Adrenal gland (tissue), 19 donors: ENCODE measurements at regions of chr18 and their contacts with region 1.

Region 1: DNA sequence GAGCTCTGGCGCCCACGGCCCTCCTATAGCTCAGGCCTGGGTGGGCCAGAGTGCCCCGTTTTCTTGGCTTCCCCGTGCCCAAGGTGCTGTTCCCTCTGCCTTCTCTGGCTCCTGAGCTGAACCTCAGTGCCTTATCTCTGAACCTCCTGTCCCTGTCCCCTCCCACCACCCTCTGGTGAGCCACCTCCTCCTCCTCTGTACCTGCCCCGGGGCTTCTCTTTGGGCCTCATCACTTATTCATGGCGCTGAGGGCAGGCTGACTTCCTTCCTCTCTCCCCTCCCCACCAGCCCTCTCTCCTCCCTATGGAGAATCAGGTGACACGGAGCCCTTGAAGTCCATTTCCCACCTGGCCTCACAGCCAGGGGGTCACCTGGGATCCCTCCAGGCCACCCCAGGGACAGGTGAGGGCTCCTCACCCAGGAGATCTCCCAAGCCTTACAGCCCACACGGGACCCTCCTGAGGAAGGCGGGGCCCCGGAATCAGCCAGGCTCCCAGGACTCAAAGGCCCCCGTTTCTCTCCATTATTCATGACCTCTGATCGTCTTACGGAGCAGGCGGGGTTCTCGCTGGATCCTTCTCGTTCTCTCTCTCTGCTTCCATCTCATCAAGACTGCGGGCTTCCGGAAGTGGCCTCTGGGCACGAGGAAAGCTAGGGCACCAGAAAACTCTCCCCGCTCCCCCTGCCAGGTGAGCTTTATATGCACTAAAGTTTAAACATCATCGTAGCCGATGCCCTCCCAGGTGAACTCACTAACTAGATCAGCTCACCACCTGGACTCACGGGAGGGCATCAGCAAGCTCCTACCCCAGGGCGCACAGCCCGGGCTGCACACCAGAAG is at the start of gene LOXHD1:
- DNase-seq: no peak
- H3K4me3 ChIP-seq: no peak within 1 kb of the TSS
- H3K27ac ChIP-seq: no peak within 1 kb of the TSS
- H3K4me1 ChIP-seq: no peaks in the 10 kb centered on the region
- H3K27me3 ChIP-seq: no peaks in the 10 kb centered on the region
- CTCF ChIP-seq: no peak
- POLR2A ChIP-seq: no peak
- total RNA-seq, gene LOXHD1: 0.28 to 0.30 TPM in 2 of 9 donors, not detected in the others

Region 2: GRCh38 chr18:46155641-46156051 is 501.7 kb before region 1 on chr18:
- intact Hi-C with region 1: loop called in 1 of 2 experiments (anchors 10 kb)
- DNase-seq: no peak
- H3K4me3 ChIP-seq: no peak overlapping the region
- H3K27ac ChIP-seq: no peak overlapping the region
- H3K4me1 ChIP-seq: peaks cover 0 to 9% of the 10 kb centered on the region in 2 donors
- H3K27me3 ChIP-seq: no peaks in the 10 kb centered on the region
- CTCF ChIP-seq: no peak
- POLR2A ChIP-seq: no peak

Region 3: GRCh38 chr18:46173393-46174341 is 483.7 kb before region 1 on chr18:
- intact Hi-C with region 1: loop called in 1 of 2 experiments (anchors 5 kb)
- DNase-seq: peak; percentile 91 to 96 (median 93)
- H3K4me3 ChIP-seq: peak overlapping the region; percentile 79 to 100 (median 86)
- H3K27ac ChIP-seq: peak overlapping the region; percentile 72 to 90 (median 87)
- H3K4me1 ChIP-seq: peaks cover 10 to 19% of the 10 kb centered on the region in 2 donors
- H3K27me3 ChIP-seq: no peaks in the 10 kb centered on the region
- CTCF ChIP-seq: peak; percentile 64 to 90 (median 82)
- POLR2A ChIP-seq: peak in 1 of 2 donors; percentile 80

Region 4: GRCh38 chr18:46590103-46590502 is 67.2 kb before region 1 on chr18:
- intact Hi-C with region 1: no loop called
- DNase-seq: no peak
- H3K4me3 ChIP-seq: no peak overlapping the region
- H3K27ac ChIP-seq: no peak overlapping the region
- H3K4me1 ChIP-seq: no peaks in the 10 kb centered on the region
- H3K27me3 ChIP-seq: no peaks in the 10 kb centered on the region
- CTCF ChIP-seq: no peak
- POLR2A ChIP-seq: no peak

Region 5: GRCh38 chr18:46601141-46601805 is 56.1 kb before region 1 on chr18:
- intact Hi-C with region 1: no loop called
- DNase-seq: no peak
- H3K4me3 ChIP-seq: no peak overlapping the region
- H3K27ac ChIP-seq: no peak overlapping the region
- H3K4me1 ChIP-seq: no peaks in the 10 kb centered on the region
- H3K27me3 ChIP-seq: no peaks in the 10 kb centered on the region
- CTCF ChIP-seq: no peak
- POLR2A ChIP-seq: no peak

Region 6: DNA sequence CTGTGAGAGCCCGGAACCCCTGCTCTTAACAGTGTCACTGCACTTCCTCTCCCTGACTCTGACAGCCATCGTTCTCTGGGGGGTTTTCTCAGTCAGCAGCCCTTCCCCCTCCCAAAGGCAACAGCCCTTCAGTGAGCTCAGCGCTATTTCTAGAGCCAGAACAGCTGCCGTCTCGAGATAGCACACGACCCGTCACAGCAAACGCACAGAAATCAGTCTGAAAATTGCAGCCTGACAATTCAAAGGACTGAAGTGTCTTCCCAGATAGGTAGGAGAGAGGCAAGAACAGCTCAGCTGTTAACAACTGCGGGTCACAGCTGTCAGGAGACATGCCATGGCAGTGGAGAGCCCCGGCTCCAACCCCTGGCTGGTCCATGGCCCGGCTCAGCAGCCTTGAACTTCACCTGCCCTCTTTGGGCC is 54.1 kb after region 1 on chr18:
- intact Hi-C with region 1: no loop called
- DNase-seq: peak in 6 of 7 donors; percentile 35 to 63 (median 56)
- H3K4me3 ChIP-seq: no peak overlapping the region
- H3K27ac ChIP-seq: peak overlapping the region in 4 of 5 donors; percentile 6 to 82 (median 58)
- H3K4me1 ChIP-seq: peaks cover 29 to 37% of the 10 kb centered on the region in 2 donors
- H3K27me3 ChIP-seq: no peaks in the 10 kb centered on the region
- CTCF ChIP-seq: no peak
- POLR2A ChIP-seq: peak in 1 of 2 donors; percentile 34